CD4-positive, alpha-beta memory T cell (primary cell): ENCODE measurements at regions of chr12 and their contacts with region 1.

Region 1: GRCh38 chr12:12376646-12377448 is 20.0 kb downstream of the BORCS5 start:
- DNase-seq: peak; percentile 62 to 82 (median 81)
- H3K4me3 ChIP-seq: no peak overlapping the region
- H3K4me3 Mint-ChIP-seq: peak overlapping the region in 1 of 8 donors; percentile 41
- H3K27ac ChIP-seq: peak overlapping the region; percentile 23
- H3K27ac Mint-ChIP-seq: peak overlapping the region; percentile 52 to 99 (median 91)
- H3K4me1 ChIP-seq: peaks cover 50% of the 10 kb centered on the region
- H3K4me1 Mint-ChIP-seq: peaks cover 36 to 48% (median 43%) of the 10 kb centered on the region in 4 donors
- H3K27me3 ChIP-seq: no peaks in the 10 kb centered on the region
- H3K27me3 Mint-ChIP-seq: no peaks in the 10 kb centered on the region

Region 2: DNA sequence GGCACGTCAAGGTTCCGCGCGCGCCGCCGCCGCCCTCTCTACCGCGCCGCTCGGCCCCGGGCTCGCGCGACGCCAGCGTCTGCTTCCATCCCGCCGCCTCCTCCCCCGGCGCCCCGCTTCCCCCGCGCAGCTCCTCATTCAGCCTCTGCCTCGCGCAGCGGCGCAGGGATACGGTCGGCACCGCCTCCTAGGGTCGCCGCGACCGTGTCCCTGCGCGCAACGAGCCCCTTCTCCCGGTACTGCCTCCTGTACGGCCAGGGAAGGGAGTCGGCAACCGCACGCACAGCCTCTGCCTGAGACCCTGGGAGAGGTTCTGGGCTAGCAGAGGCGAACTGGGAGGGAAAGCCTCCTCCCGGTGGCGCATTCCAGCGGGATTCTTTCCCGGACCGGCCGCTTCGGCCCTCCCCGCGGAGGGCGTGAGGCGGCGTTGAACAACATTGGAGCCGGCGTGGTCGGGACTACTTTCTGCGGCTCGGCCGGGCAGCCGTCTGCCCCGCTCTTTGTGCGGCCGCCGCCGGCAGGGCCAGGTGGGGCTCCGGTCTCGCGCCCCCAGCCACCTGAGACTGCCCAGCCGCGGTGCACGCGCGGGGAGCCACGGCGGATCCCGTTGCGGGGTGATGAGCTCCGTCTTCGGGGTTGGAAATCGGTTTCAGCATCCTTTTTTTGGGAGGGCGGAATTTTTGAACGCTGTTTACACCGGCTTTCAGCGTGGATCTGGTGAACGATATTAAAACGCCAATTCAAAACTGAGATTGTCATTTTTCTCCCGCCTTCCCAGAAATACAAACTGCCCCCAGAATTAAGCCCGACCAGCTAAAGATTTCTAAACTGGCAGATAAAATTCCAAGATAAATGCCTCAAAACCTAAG is 109.7 kb before region 1 on chr12 and contains the start of gene LRP6:
- CTCF ChIA-PET with region 1: no interaction called
- POLR2A ChIA-PET with region 1: no interaction called
- intact Hi-C with region 1: no loop called
- DNase-seq: peak; percentile 55 to 75 (median 67)
- H3K4me3 ChIP-seq: peak within 1 kb of the TSS; percentile 65 to 76
- H3K4me3 Mint-ChIP-seq: peak within 1 kb of the TSS; percentile 85 to 91 (median 90)
- H3K27ac ChIP-seq: peak within 1 kb of the TSS; percentile 32
- H3K27ac Mint-ChIP-seq: peak within 1 kb of the TSS; percentile 46 to 78 (median 70)
- H3K4me1 ChIP-seq: peaks cover 18% of the 10 kb centered on the region
- H3K4me1 Mint-ChIP-seq: peaks cover 12 to 31% (median 21%) of the 10 kb centered on the region in 4 donors
- H3K27me3 ChIP-seq: peaks cover 6% of the 10 kb centered on the region
- H3K27me3 Mint-ChIP-seq: peaks cover 0 to 13% of the 10 kb centered on the region in 2 donors
- total RNA-seq, gene LRP6: 3.9 to 4.0 TPM

Region 3: DNA sequence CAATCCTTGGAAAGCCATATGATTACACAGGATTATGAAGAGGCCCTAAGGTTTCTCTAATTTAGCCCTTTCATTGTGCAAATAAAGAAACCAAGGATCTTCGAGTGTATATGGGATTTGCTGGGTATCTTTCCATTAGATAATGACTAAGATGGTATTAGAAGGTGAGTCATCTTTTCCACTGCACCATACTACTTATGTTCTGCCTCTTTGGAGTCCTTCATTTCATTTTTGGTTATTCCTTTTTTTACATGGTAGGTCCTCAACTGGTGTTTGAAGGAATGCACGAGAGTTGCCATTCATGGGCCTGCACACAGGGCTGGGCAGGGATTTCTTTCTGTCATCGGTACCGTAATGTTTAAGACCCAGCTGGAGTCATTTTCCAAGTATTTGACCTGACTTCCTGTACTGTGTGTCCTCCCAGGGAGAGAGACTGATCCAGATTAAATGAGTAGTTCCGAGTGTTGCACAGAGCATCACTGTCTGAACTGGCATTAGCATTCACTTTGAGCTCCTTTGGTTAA is 65.8 kb after region 1 on chr12:
- CTCF ChIA-PET with region 1: interaction called, 11 read pairs
- POLR2A ChIA-PET with region 1: interaction called, 31 read pairs
- intact Hi-C with region 1: loop called (anchors 2 kb)
- DNase-seq: no peak
- H3K4me3 ChIP-seq: no peak overlapping the region
- H3K4me3 Mint-ChIP-seq: peak overlapping the region in 6 of 8 donors; percentile 8 to 85 (median 70)
- H3K27ac ChIP-seq: peak overlapping the region; percentile 65
- H3K27ac Mint-ChIP-seq: peak overlapping the region; percentile 90 to 99 (median 98)
- H3K4me1 ChIP-seq: peaks cover 95% of the 10 kb centered on the region
- H3K4me1 Mint-ChIP-seq: peaks cover 68 to 93% (median 80%) of the 10 kb centered on the region in 4 donors
- H3K27me3 ChIP-seq: no peaks in the 10 kb centered on the region
- H3K27me3 Mint-ChIP-seq: no peaks in the 10 kb centered on the region

Region 4: GRCh38 chr12:12474931-12475795 is 98.3 kb after region 1 on chr12:
- CTCF ChIA-PET with region 1: interaction called, 100 read pairs
- POLR2A ChIA-PET with region 1: interaction called, 111 read pairs
- intact Hi-C with region 1: loop called (anchors 1 kb)
- DNase-seq: peak; percentile 76 to 82 (median 80)
- H3K4me3 ChIP-seq: peak overlapping the region; percentile 25 to 51
- H3K4me3 Mint-ChIP-seq: peak overlapping the region; percentile 67 to 89 (median 82)
- H3K27ac ChIP-seq: peak overlapping the region; percentile 81
- H3K27ac Mint-ChIP-seq: peak overlapping the region; percentile 91 to 99 (median 98)
- H3K4me1 ChIP-seq: peaks cover 64% of the 10 kb centered on the region
- H3K4me1 Mint-ChIP-seq: peaks cover 44 to 87% (median 65%) of the 10 kb centered on the region in 4 donors
- H3K27me3 ChIP-seq: no peaks in the 10 kb centered on the region
- H3K27me3 Mint-ChIP-seq: no peaks in the 10 kb centered on the region

Region 5: DNA sequence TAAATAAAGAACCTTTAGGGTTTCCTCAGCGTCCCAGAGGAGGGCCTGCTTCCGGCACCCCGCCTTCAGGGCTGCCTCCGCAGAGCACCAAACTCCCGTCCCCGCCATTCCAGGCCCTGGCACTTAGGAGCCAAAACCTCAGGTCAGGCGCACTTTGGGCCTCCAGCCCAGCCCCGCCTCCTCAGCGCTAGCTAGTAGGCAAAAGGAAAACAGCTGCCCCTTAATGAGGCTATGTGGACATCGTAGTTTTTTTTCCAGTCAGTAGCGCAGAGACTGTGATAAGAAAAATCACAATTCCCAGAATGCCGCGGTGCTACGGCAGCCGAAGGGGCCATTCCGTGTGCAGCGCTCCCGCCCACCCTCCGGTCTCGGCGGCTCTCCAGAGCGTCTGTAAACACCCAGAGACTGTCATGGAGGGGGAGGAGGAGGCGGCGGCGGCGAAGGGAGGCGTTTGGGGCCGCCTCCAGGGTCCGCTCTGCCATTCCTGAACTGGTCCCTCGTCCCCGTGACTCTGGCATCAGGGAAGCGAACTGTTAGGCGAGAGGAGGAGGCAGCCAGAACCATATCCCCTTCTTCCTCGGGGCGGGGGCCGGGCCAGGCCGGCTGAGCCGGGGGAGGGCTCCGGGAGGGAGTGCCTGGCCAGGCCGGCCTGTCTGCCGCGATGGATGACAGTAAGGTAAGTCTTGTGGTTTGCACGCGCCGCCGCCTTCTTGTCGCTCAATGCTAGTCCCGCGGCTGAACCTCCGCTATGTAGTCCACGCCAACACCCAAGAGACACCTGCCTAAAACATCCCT is 234.9 kb after region 1 on chr12 and contains the start of gene CREBL2:
- CTCF ChIA-PET with region 1: interaction called, 7 read pairs
- POLR2A ChIA-PET with region 1: interaction called, 3 read pairs
- intact Hi-C with region 1: loop called (anchors 2 kb)
- DNase-seq: peak; percentile 88 to 89 (median 88)
- H3K4me3 ChIP-seq: peak within 1 kb of the TSS; percentile 92 to 97
- H3K4me3 Mint-ChIP-seq: peak within 1 kb of the TSS; percentile 92 to 99 (median 95)
- H3K27ac ChIP-seq: peak within 1 kb of the TSS; percentile 77
- H3K27ac Mint-ChIP-seq: peak within 1 kb of the TSS; percentile 93 to 99 (median 99)
- H3K4me1 ChIP-seq: peaks cover 66% of the 10 kb centered on the region
- H3K4me1 Mint-ChIP-seq: peaks cover 34 to 73% (median 54%) of the 10 kb centered on the region in 4 donors
- H3K27me3 ChIP-seq: no peaks in the 10 kb centered on the region
- H3K27me3 Mint-ChIP-seq: no peaks in the 10 kb centered on the region
- total RNA-seq, gene CREBL2: 51.0 to 52.0 TPM

Region 6: GRCh38 chr12:12661086-12661485 is 284.2 kb after region 1 on chr12:
- CTCF ChIA-PET with region 1: interaction called, 75 read pairs
- POLR2A ChIA-PET with region 1: interaction called, 27 read pairs
- intact Hi-C with region 1: loop called (anchors 1 kb)
- DNase-seq: no peak
- H3K4me3 ChIP-seq: no peak overlapping the region
- H3K4me3 Mint-ChIP-seq: no peak overlapping the region
- H3K27ac ChIP-seq: no peak overlapping the region
- H3K27ac Mint-ChIP-seq: no peak overlapping the region
- H3K4me1 ChIP-seq: peaks cover 2% of the 10 kb centered on the region
- H3K4me1 Mint-ChIP-seq: peaks cover 0 to 1% (median under 1%) of the 10 kb centered on the region in 4 donors
- H3K27me3 ChIP-seq: no peaks in the 10 kb centered on the region
- H3K27me3 Mint-ChIP-seq: no peaks in the 10 kb centered on the region

Region 7: GRCh38 chr12:12716793-12717585 is 340.1 kb after region 1 on chr12 and contains the start of gene CDKN1B:
- CTCF ChIA-PET with region 1: interaction called, 7 read pairs
- POLR2A ChIA-PET with region 1: interaction called, 60 read pairs
- intact Hi-C with region 1: no loop called
- DNase-seq: peak; percentile 87 to 90 (median 89)
- H3K4me3 ChIP-seq: peak within 1 kb of the TSS; percentile 94 to 99
- H3K4me3 Mint-ChIP-seq: peak within 1 kb of the TSS; percentile 96 to 100 (median 98)
- H3K27ac ChIP-seq: peak within 1 kb of the TSS; percentile 95
- H3K27ac Mint-ChIP-seq: peak within 1 kb of the TSS; percentile 96 to 99 (median 98)
- H3K4me1 ChIP-seq: peaks cover 51% of the 10 kb centered on the region
- H3K4me1 Mint-ChIP-seq: peaks cover 38 to 63% (median 47%) of the 10 kb centered on the region in 4 donors
- H3K27me3 ChIP-seq: no peaks in the 10 kb centered on the region
- H3K27me3 Mint-ChIP-seq: no peaks in the 10 kb centered on the region
- total RNA-seq, gene CDKN1B: 232 to 238 TPM

Region 8: GRCh38 chr12:12786716-12787601 is 410.1 kb after region 1 on chr12:
- CTCF ChIA-PET with region 1: interaction called, 8 read pairs
- POLR2A ChIA-PET with region 1: no interaction called
- intact Hi-C with region 1: loop called (anchors 5 kb)
- DNase-seq: peak; percentile 73 to 78 (median 76)
- H3K4me3 ChIP-seq: peak overlapping the region; percentile 75 to 81
- H3K4me3 Mint-ChIP-seq: peak overlapping the region; percentile 80 to 92 (median 88)
- H3K27ac ChIP-seq: peak overlapping the region; percentile 65
- H3K27ac Mint-ChIP-seq: peak overlapping the region; percentile 48 to 90 (median 85)
- H3K4me1 ChIP-seq: peaks cover 27% of the 10 kb centered on the region
- H3K4me1 Mint-ChIP-seq: peaks cover 4 to 30% (median 10%) of the 10 kb centered on the region in 4 donors
- H3K27me3 ChIP-seq: no peaks in the 10 kb centered on the region
- H3K27me3 Mint-ChIP-seq: no peaks in the 10 kb centered on the region